ENCODE measurements at regions of chr22 and their contacts with region 1.

Region 1: GRCh38 chr22:36065775-36066559 is 37.3 kb upstream of the RBFOX2 start:
- DNase-seq: peak; percentile 34 to 80 (median 64)
- ATAC-seq: peak; percentile 81
- H3K4me3 ChIP-seq: peak overlapping the region; percentile 58 to 62
- H3K4me3 Mint-ChIP-seq: peak overlapping the region; percentile 81
- H3K27ac ChIP-seq: no peak overlapping the region
- H3K27ac Mint-ChIP-seq: no peak overlapping the region
- H3K4me1 ChIP-seq: peaks cover 9% of the 10 kb centered on the region
- H3K4me1 Mint-ChIP-seq: peaks cover 9% of the 10 kb centered on the region
- H3K27me3 ChIP-seq: no peaks in the 10 kb centered on the region
- H3K27me3 Mint-ChIP-seq: no peaks in the 10 kb centered on the region
- CTCF ChIP-seq: peak; percentile 99

Region 2: GRCh38 chr22:35684270-35684700 is 381.7 kb before region 1 on chr22:
- CTCF ChIA-PET with region 1: no interaction called
- POLR2A ChIA-PET with region 1: no interaction called
- intact Hi-C with region 1: no loop called
- DNase-seq: no peak
- ATAC-seq: no peak
- H3K4me3 ChIP-seq: no peak overlapping the region
- H3K4me3 Mint-ChIP-seq: no peak overlapping the region
- H3K27ac ChIP-seq: no peak overlapping the region
- H3K27ac Mint-ChIP-seq: no peak overlapping the region
- H3K4me1 ChIP-seq: no peaks in the 10 kb centered on the region
- H3K4me1 Mint-ChIP-seq: peaks cover 6% of the 10 kb centered on the region
- H3K27me3 ChIP-seq: peaks cover 0 to 3% of the 10 kb centered on the region in 2 experiments
- H3K27me3 Mint-ChIP-seq: no peaks in the 10 kb centered on the region
- CTCF ChIP-seq: no peak

Region 3: GRCh38 chr22:36052505-36053270 is 13.3 kb before region 1 on chr22:
- CTCF ChIA-PET with region 1: interaction called, 42 read pairs
- POLR2A ChIA-PET with region 1: interaction called, 3 read pairs
- intact Hi-C with region 1: no loop called
- DNase-seq: no peak
- ATAC-seq: peak; percentile 29
- H3K4me3 ChIP-seq: no peak overlapping the region
- H3K4me3 Mint-ChIP-seq: no peak overlapping the region
- H3K27ac ChIP-seq: no peak overlapping the region
- H3K27ac Mint-ChIP-seq: no peak overlapping the region
- H3K4me1 ChIP-seq: no peaks in the 10 kb centered on the region
- H3K4me1 Mint-ChIP-seq: no peaks in the 10 kb centered on the region
- H3K27me3 ChIP-seq: no peaks in the 10 kb centered on the region
- H3K27me3 Mint-ChIP-seq: peaks cover 18% of the 10 kb centered on the region
- CTCF ChIP-seq: no peak

Region 4: DNA sequence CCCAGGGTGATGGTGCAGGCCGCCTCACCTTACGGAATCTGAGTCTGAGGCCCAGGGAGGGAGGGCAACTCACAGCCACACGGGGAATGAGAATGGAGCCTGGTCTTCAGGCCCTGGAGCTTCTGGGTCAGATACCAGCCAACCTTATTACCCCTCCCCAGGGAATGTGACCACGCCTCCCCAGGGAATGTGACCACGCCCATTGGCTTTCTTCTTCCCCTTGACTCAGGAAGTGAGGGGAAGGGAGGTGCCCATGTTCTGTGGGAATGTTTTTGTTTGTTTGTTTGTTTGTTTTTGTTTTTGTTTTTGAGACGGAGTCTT is 20.2 kb after region 1 on chr22:
- CTCF ChIA-PET with region 1: interaction called, 10 read pairs
- POLR2A ChIA-PET with region 1: no interaction called
- intact Hi-C with region 1: no loop called
- DNase-seq: no peak
- ATAC-seq: no peak
- H3K4me3 ChIP-seq: no peak overlapping the region
- H3K4me3 Mint-ChIP-seq: no peak overlapping the region
- H3K27ac ChIP-seq: no peak overlapping the region
- H3K27ac Mint-ChIP-seq: no peak overlapping the region
- H3K4me1 ChIP-seq: no peaks in the 10 kb centered on the region
- H3K4me1 Mint-ChIP-seq: no peaks in the 10 kb centered on the region
- H3K27me3 ChIP-seq: no peaks in the 10 kb centered on the region
- H3K27me3 Mint-ChIP-seq: peaks cover 2% of the 10 kb centered on the region
- CTCF ChIP-seq: no peak

Region 5: DNA sequence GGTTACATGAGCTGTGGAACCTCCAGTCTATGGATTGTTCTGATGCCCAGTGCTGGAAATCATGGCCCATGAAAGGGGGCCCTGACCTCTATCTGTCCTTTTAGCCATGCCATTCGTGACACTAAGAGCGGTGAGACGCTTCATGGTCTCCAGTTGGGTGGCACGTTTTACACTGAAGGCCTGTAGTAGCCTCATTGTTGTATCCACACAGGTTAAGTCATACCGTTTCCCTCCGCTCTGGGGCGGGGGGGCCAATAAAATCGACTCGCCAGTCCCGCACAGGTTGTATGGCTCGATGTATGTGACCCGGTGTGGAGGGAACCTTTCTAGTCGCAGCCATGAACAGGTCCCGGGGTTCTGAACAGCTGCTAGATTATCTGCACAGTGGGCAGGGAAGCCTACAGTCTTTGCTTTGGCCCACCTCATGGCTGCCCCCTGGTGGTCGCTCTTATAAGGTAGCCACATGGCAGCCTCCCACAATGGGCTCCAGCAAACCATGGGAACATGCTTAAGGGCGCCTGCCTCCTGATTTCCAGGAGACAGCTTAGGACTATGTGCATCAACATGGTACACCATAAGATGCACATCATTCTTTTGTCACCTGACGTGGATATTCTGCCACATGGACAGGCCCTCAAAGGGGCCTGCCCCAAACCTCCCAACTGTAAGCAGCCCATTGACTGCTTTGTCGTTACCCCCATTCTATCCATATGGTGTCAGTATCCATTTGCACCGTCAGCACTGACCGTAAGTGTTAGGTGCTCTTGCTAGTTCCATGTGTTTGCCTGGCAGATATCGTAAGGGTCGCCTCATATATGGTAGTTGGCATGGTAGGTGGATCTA is 114.3 kb after region 1 on chr22:
- CTCF ChIA-PET with region 1: interaction called, 52 read pairs
- POLR2A ChIA-PET with region 1: no interaction called
- intact Hi-C with region 1: loop called (anchors 1 kb)
- DNase-seq: peak; percentile 75 to 94 (median 87)
- ATAC-seq: peak; percentile 99
- H3K4me3 ChIP-seq: no peak overlapping the region
- H3K4me3 Mint-ChIP-seq: no peak overlapping the region
- H3K27ac ChIP-seq: no peak overlapping the region
- H3K27ac Mint-ChIP-seq: no peak overlapping the region
- H3K4me1 ChIP-seq: peaks cover 4% of the 10 kb centered on the region
- H3K4me1 Mint-ChIP-seq: peaks cover 4% of the 10 kb centered on the region
- H3K27me3 ChIP-seq: no peaks in the 10 kb centered on the region
- H3K27me3 Mint-ChIP-seq: no peaks in the 10 kb centered on the region
- CTCF ChIP-seq: peak; percentile 84

Region 6: DNA sequence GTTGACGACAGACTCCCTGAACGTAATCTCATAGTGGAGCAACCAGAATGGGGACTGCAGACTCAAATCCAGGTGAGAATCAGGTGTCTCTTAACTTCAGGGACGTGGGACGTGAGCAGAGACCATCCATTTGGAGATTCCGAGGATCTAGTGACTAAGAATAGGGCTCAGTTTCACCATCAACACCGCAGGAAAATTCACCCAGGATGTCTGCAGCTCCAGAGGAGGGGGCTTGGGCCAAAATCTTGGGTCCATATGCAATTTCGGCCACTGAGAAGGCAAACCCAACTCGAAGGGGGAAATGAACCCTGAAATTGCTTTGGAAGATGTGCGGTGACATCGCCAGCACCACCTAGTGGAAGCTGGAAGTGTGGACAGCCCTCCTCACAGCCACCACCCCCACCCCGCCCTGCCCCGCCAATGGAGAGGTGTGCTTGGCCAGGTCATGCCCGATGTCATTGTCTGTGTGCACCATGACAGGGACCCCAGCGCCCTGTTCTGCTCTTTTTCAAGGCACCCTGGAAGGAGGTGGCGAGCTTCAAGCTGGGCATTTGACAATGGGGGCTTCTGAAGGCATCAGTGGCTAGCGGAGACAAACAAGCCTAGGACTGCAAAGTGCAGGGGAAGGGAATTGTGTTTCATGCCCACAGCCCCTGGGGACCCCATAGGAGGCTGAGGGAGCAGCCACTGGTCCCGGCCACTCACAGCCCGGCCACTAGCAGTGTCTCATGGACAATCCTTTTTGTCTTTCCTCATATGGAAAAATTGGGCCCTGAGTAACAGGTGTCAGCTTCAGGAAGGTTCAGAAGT is 211.7 kb after region 1 on chr22:
- CTCF ChIA-PET with region 1: no interaction called
- POLR2A ChIA-PET with region 1: no interaction called
- intact Hi-C with region 1: loop called in 1 of 2 experiments (anchors 5 kb)
- DNase-seq: peak; percentile 44 to 84 (median 64)
- ATAC-seq: peak; percentile 85
- H3K4me3 ChIP-seq: no peak overlapping the region
- H3K4me3 Mint-ChIP-seq: peak overlapping the region; percentile 11
- H3K27ac ChIP-seq: peak overlapping the region in 1 of 2 experiments; percentile 30
- H3K27ac Mint-ChIP-seq: peak overlapping the region; percentile 50
- H3K4me1 ChIP-seq: peaks cover 21% of the 10 kb centered on the region
- H3K4me1 Mint-ChIP-seq: peaks cover 18% of the 10 kb centered on the region
- H3K27me3 ChIP-seq: no peaks in the 10 kb centered on the region
- H3K27me3 Mint-ChIP-seq: no peaks in the 10 kb centered on the region
- CTCF ChIP-seq: peak; percentile 73

Measured in CD8-positive, alpha-beta T cell (primary cell).